ENCODE measurements at regions of chr1 and their contacts with region 1.

Region 1: GRCh38 chr1:93909146-93910050 is at the start of gene GCLM:
- DNase-seq: peak; percentile 94
- H3K4me3 ChIP-seq: peak within 1 kb of the TSS; percentile 50 to 90 (median 78)
- H3K27ac ChIP-seq: peak within 1 kb of the TSS; percentile 88
- H3K4me1 ChIP-seq: peaks cover 16% of the 10 kb centered on the region
- H3K27me3 ChIP-seq: no peaks in the 10 kb centered on the region
- CTCF ChIP-seq: peak; percentile 68 to 70
- total RNA-seq, gene GCLM: 96.5 to 129 TPM

Region 2: GRCh38 chr1:93878889-93879586 is 30.4 kb before region 1 on chr1 and contains the start of gene DNTTIP2:
- CTCF ChIA-PET with region 1: no interaction called
- dilution Hi-C with region 1: no loop called
- in situ Hi-C with region 1: no loop called
- intact Hi-C with region 1: loop called (anchors 2 kb)
- DNase-seq: peak; percentile 90
- H3K4me3 ChIP-seq: peak within 1 kb of the TSS; percentile 77 to 86 (median 80)
- H3K27ac ChIP-seq: peak within 1 kb of the TSS; percentile 92
- H3K4me1 ChIP-seq: peaks cover 28% of the 10 kb centered on the region
- H3K27me3 ChIP-seq: no peaks in the 10 kb centered on the region
- CTCF ChIP-seq: no peak
- total RNA-seq, gene DNTTIP2: 40.5 to 74.9 TPM

Region 3: DNA sequence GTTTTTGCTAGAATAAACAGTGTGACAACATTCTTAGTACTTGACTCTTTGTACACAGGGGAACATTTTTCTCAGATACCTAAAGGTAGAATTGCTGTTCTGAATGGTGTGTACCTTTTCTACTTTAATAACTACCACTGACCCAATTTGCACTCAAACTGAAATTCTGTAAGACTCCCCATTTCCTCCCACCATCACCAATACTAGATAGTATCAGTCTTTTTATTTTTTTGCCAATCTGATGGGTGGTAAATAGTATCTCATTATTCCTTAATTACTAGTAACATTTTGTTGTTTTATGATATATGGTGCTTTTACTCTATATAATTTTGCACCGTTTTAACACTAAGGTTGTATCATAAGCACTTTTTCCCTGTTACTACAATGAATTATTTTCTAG is 28.6 kb after region 1 on chr1:
- CTCF ChIA-PET with region 1: no interaction called
- dilution Hi-C with region 1: no loop called
- in situ Hi-C with region 1: no loop called
- intact Hi-C with region 1: no loop called
- DNase-seq: no peak
- H3K4me3 ChIP-seq: no peak overlapping the region
- H3K27ac ChIP-seq: no peak overlapping the region
- H3K4me1 ChIP-seq: no peaks in the 10 kb centered on the region
- H3K27me3 ChIP-seq: no peaks in the 10 kb centered on the region
- CTCF ChIP-seq: no peak

Region 4: GRCh38 chr1:93988634-93989350 is 79.4 kb after region 1 on chr1:
- CTCF ChIA-PET with region 1: no interaction called
- dilution Hi-C with region 1: no loop called
- in situ Hi-C with region 1: no loop called
- intact Hi-C with region 1: loop called (anchors 1 kb)
- DNase-seq: peak; percentile 97
- H3K4me3 ChIP-seq: peak overlapping the region in 1 of 3 experiments; percentile 9
- H3K27ac ChIP-seq: peak overlapping the region; percentile 83
- H3K4me1 ChIP-seq: peaks cover 61% of the 10 kb centered on the region
- H3K27me3 ChIP-seq: no peaks in the 10 kb centered on the region
- CTCF ChIP-seq: no peak

Region 5: DNA sequence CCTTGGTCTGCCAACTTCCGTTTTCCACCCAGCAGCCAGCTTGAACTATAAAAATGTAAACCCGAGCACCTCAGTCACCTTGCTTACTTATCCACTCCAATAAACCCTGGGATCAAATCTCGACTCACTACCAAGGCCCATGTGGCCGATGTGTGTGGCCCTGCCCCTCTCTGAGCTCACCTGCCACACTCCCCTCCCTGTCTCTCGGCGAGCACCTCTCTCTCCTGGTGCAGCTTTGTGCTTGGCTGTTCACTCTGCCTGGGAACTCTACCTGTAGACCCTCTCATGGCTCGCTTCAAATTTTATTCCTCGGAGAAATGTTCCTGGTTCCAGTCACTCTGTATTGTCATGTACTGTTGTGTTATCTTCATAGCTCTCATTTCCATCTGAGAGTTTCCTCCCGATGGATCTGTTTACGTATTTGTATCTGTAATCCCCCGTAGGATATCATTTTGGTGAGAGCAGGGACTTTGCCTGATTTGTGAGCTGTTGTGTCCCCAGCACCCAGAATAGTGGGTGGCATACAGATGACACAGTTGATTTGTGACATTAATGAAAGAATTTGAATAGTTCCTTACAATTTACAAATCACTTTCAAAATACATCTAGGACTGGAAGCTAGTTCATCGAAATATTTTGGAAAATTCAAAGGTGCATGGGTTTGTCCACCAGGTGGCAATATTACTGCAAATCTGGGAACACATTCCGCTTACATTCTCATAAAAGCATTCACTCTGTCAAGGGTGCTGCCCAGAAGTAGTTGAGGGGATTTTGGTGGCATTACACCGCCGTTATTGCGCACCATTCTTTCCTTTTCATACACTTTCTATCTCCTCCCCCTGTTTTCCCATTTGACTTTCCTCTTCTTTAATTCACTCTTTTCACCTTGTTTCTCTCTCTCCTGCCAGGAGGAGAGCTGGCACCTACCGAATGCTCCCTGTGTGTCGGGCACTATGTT is 116.3 kb after region 1 on chr1:
- CTCF ChIA-PET with region 1: no interaction called
- dilution Hi-C with region 1: no loop called
- in situ Hi-C with region 1: no loop called
- intact Hi-C with region 1: loop called (anchors 2 kb)
- DNase-seq: peak; percentile 63
- H3K4me3 ChIP-seq: no peak overlapping the region
- H3K27ac ChIP-seq: no peak overlapping the region
- H3K4me1 ChIP-seq: peaks cover 60% of the 10 kb centered on the region
- H3K27me3 ChIP-seq: no peaks in the 10 kb centered on the region
- CTCF ChIP-seq: peak; percentile 68 to 74

Region 6: DNA sequence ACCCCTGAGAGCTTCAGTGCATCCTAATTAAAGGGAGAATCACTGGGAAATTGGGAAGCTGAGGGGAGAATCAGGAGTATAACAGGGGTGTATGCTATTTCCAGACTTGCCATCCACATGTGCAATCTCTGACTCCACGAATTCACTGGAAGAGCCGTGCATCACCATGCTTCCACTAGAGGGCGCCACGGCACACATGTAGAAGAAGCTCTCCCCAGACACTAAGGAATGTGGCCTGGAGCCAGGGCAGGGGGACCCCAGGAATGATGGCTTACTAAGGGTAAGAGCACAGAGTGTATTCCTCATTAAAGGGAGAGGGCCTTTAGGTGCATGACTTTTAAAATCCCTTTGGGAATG is 130.1 kb after region 1 on chr1:
- CTCF ChIA-PET with region 1: no interaction called
- dilution Hi-C with region 1: no loop called
- in situ Hi-C with region 1: no loop called
- intact Hi-C with region 1: loop called (anchors 1 kb)
- DNase-seq: no peak
- H3K4me3 ChIP-seq: no peak overlapping the region
- H3K27ac ChIP-seq: no peak overlapping the region
- H3K4me1 ChIP-seq: peaks cover 23% of the 10 kb centered on the region
- H3K27me3 ChIP-seq: no peaks in the 10 kb centered on the region
- CTCF ChIP-seq: peak; percentile 90 to 97

Region 7: GRCh38 chr1:94417978-94418663 is 508.7 kb after region 1 on chr1 and contains the start of gene ABCD3:
- CTCF ChIA-PET with region 1: no interaction called
- dilution Hi-C with region 1: no loop called
- in situ Hi-C with region 1: no loop called
- intact Hi-C with region 1: loop called (anchors 2 kb)
- DNase-seq: peak; percentile 97
- H3K4me3 ChIP-seq: peak within 1 kb of the TSS; percentile 75 to 94 (median 91)
- H3K27ac ChIP-seq: peak within 1 kb of the TSS; percentile 91
- H3K4me1 ChIP-seq: peaks cover 37% of the 10 kb centered on the region
- H3K27me3 ChIP-seq: no peaks in the 10 kb centered on the region
- CTCF ChIP-seq: no peak
- total RNA-seq, gene ABCD3: 50.3 to 56.2 TPM